ENCODE measurements at regions of chr17 and their contacts with region 1.

Region 1: GRCh38 chr17:77319211-77320043 is 178.7 kb downstream of the SEC14L1 start:
- DNase-seq: peak; percentile 57
- H3K4me3 ChIP-seq: no peak overlapping the region
- H3K27ac ChIP-seq: peak overlapping the region; percentile 25
- H3K4me1 ChIP-seq: peaks cover 76% of the 10 kb centered on the region
- CTCF ChIP-seq: no peak

Region 2: GRCh38 chr17:77280980-77281903 is 38.2 kb before region 1 on chr17:
- CTCF ChIA-PET with region 1: no interaction called
- POLR2A ChIA-PET with region 1: no interaction called
- intact Hi-C with region 1: loop called (anchors 2 kb)
- DNase-seq: peak; percentile 87
- H3K4me3 ChIP-seq: peak overlapping the region; percentile 75
- H3K27ac ChIP-seq: peak overlapping the region; percentile 21
- H3K4me1 ChIP-seq: peaks cover 22% of the 10 kb centered on the region
- CTCF ChIP-seq: peak; percentile 51; the same call in 1 of the 2 replicates